K562 (cell line): ENCODE measurements at regions of chr3 and their contacts with region 1.

Region 1: GRCh38 chr3:58630076-58630709 is 36.4 kb downstream of the FAM3D start:
- DNase-seq: peak; percentile 62 to 73 (median 68)
- ATAC-seq: peak; percentile 90
- H3K4me3 ChIP-seq: no peak overlapping the region
- H3K27ac ChIP-seq: no peak overlapping the region
- H3K4me1 ChIP-seq: peaks cover 0 to 3% of the 10 kb centered on the region in 2 experiments; a peak in 1 of 5 replicates
- H3K27me3 ChIP-seq: peaks cover 5 to 48% of the 10 kb centered on the region in 2 experiments; a peak in 4 of 5 replicates
- CTCF ChIP-seq: peak; percentile 69 to 84 (median 79)
- EP300 ChIP-seq: no peak
- POLR2A ChIP-seq: no peak
- RAD21 ChIP-seq: peak; percentile 69 to 77

Region 2: DNA sequence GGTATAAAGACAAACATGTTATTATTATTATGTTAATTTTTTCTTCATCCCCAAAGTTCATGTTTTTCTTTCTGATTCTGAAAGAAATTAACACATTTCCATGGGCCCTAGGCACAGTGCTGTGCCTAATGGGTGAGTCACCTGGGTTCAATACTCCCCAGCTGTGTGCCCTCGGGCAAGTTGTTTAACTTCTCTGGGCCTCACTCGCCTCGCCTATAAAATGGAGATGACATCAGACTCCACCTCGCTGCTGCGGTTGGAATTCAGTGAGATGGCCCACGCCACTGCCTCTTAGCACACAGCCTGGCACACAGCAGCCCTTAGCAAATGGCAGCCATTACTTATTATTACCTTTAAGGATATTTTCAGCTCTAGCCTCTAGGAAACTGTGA is 442.0 kb before region 1 on chr3:
- CTCF ChIA-PET with region 1: interaction called, 3 read pairs
- POLR2A ChIA-PET with region 1: no interaction called
- in situ Hi-C with region 1: no loop called
- intact Hi-C with region 1: loop called (anchors 1 kb)
- DNase-seq: no peak
- ATAC-seq: no peak
- H3K4me3 ChIP-seq: no peak overlapping the region
- H3K27ac ChIP-seq: no peak overlapping the region
- H3K4me1 ChIP-seq: peaks cover 4 to 16% of the 10 kb centered on the region in 2 experiments
- H3K27me3 ChIP-seq: no peaks in the 10 kb centered on the region
- CTCF ChIP-seq: no peak
- EP300 ChIP-seq: no peak
- POLR2A ChIP-seq: no peak
- RAD21 ChIP-seq: no peak

Region 3: GRCh38 chr3:58305882-58306711 is 324.1 kb before region 1 on chr3 and contains the starts of genes HTD2 and RPP14:
- CTCF ChIA-PET with region 1: no interaction called
- POLR2A ChIA-PET with region 1: interaction called, 3 read pairs
- in situ Hi-C with region 1: no loop called
- intact Hi-C with region 1: loop called (anchors 10 kb)
- DNase-seq: peak; percentile 88 to 96 (median 90)
- ATAC-seq: peak; percentile 95
- H3K4me3 ChIP-seq: peak within 1 kb of the TSS; percentile 80
- H3K27ac ChIP-seq: peak within 1 kb of the TSS; percentile 96
- H3K4me1 ChIP-seq: peaks cover 0 to 7% of the 10 kb centered on the region in 2 experiments; a peak in 3 of 5 replicates
- H3K27me3 ChIP-seq: no peaks in the 10 kb centered on the region
- CTCF ChIP-seq: peak; percentile 87 to 92 (median 91)
- EP300 ChIP-seq: peak; percentile 28; the same call in 1 of the 2 replicates
- POLR2A ChIP-seq: peak; percentile 86
- RAD21 ChIP-seq: peak; percentile 27 to 55; a peak in 3 of 4 replicates
- polyA plus RNA-seq, gene HTD2: 13.9 to 22.8 TPM
- polyA plus RNA-seq, gene RPP14: 20.5 to 20.8 TPM

Region 4: DNA sequence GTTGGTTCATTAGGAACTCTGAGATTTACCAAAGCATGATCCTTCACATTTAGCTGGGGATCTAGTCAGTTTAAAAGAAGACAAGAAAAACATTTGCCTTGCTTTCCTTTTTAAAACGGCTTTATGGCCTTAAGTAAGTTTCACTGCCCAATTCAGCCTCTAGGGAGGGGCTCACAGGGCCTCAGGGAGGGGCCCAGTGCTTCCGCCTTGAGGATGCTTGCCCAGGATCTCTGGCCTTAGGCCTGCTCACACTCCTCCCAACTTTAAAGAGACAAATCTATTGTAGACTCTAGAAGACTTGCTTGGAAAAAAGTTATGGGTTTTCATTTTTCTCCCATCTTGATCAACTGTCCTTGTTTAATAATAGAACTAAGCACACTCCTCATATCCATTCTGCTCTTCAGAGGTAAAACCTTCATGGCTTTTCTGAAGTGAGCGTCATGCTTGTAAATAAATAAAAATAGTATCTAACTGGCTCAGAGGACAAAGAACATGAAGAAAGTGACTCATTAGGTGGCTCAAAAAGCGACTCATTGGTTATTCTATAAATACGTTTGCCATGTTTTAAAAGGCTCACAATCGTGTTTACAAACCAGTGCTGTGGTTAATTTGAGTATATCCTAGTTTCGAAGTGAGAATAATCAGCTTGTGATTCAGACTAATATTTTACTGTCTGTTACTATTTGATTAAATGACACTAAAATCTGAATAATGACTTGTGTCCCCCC is 210.2 kb before region 1 on chr3:
- CTCF ChIA-PET with region 1: no interaction called
- POLR2A ChIA-PET with region 1: no interaction called
- in situ Hi-C with region 1: no loop called
- intact Hi-C with region 1: loop called (anchors 5 kb)
- DNase-seq: peak in 2 of 4 experiments; percentile 12 to 17
- ATAC-seq: no peak
- H3K4me3 ChIP-seq: no peak overlapping the region
- H3K27ac ChIP-seq: no peak overlapping the region
- H3K4me1 ChIP-seq: no peaks in the 10 kb centered on the region; a peak in 1 of 5 replicates
- H3K27me3 ChIP-seq: no peaks in the 10 kb centered on the region
- CTCF ChIP-seq: no peak
- EP300 ChIP-seq: no peak
- POLR2A ChIP-seq: no peak
- RAD21 ChIP-seq: no peak

Region 5: DNA sequence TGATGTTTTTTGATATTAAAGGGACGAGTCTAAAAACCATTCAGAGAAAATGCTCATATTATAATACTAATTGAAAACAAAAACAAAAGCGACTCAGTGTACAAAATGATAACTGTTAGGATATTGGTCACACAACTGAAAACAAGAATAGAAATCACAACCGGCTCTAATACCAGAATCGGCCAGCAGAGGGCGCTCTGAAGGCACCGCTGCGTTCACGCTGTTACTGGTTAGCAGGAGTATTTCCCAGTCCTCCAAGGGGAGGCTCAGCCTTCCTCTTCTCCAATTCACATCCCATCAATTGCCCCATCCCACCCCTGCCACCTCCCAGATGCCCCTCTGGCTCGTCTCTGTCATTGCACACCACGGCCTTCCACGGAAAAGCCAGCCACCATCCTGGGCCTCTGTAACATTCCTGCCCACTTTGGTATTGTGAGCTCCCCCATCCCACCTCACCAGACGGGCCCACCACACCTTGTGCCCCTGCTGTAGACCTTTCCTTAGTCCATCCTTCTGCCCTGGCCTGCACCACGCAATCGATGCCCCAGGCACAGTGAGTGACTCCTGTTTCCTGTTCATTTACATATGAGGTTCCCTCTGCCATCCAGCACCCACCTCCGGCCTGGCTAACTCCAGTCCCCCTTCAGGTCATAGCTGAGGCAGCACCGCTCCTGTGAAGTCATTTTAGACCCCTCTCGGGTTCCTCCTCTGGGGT is 61.5 kb before region 1 on chr3:
- CTCF ChIA-PET with region 1: interaction called, 4 read pairs
- POLR2A ChIA-PET with region 1: no interaction called
- in situ Hi-C with region 1: no loop called
- intact Hi-C with region 1: loop called (anchors 1 kb)
- DNase-seq: peak; percentile 46 to 68 (median 56)
- ATAC-seq: peak; percentile 80
- H3K4me3 ChIP-seq: no peak overlapping the region
- H3K27ac ChIP-seq: no peak overlapping the region
- H3K4me1 ChIP-seq: no peaks in the 10 kb centered on the region
- H3K27me3 ChIP-seq: peaks cover 0 to 53% of the 10 kb centered on the region in 2 experiments; a peak in 2 of 5 replicates
- CTCF ChIP-seq: peak; percentile 72 to 82 (median 78)
- EP300 ChIP-seq: no peak
- POLR2A ChIP-seq: no peak
- RAD21 ChIP-seq: peak; percentile 43 to 66

Region 6: DNA sequence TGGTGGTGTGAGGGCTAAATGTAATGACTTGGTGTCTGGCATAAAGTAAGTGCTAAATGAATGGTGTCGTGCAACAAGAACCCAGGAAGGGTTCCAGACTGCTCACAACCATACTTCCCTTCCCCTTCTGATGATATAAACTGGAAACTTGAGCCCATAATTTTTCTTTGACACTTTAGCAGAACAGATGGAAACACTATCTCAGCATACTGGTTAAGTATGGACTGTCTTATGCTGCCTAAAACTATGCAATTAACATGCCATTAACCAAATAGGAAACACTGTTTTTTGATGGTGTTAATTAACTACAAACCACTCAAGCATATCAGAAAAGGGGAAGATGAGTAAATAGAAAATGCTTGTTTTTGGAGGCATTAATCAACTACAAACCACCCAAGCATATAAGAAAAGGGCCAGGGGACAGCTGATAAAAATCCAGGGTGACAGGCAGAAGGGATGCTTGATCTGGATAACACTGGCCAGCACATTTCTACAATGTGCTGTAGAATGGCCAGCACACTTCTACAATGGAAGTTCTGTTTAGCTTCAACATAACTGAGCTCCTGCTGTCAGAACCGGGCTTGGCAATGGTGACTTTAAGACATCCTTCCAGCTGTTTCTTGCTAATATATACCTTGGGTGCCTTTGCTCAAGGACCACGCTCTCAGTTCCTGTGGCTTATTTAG is 121.8 kb after region 1 on chr3:
- CTCF ChIA-PET with region 1: no interaction called
- POLR2A ChIA-PET with region 1: no interaction called
- in situ Hi-C with region 1: no loop called
- intact Hi-C with region 1: no loop called
- DNase-seq: no peak
- ATAC-seq: no peak
- H3K4me3 ChIP-seq: no peak overlapping the region
- H3K27ac ChIP-seq: no peak overlapping the region
- H3K4me1 ChIP-seq: no peaks in the 10 kb centered on the region
- H3K27me3 ChIP-seq: no peaks in the 10 kb centered on the region
- CTCF ChIP-seq: no peak
- EP300 ChIP-seq: no peak
- POLR2A ChIP-seq: no peak
- RAD21 ChIP-seq: no peak